Naive thymus-derived CD4-positive, alpha-beta T cell (primary cell): ENCODE measurements at regions of chr9 and their contacts with region 1.

Region 1: GRCh38 chr9:2087500-2088313 is 72.6 kb downstream of the SMARCA2 start:
- DNase-seq: peak in 7 of 9 donors; percentile 36 to 64 (median 58)
- ATAC-seq: peak; percentile 97
- H3K4me3 ChIP-seq: no peak overlapping the region
- H3K4me3 Mint-ChIP-seq: no peak overlapping the region
- H3K27ac ChIP-seq: no peak overlapping the region
- H3K27ac Mint-ChIP-seq: peak overlapping the region in 4 of 9 donors; percentile 0 to 8 (median 4)
- H3K4me1 ChIP-seq: no peaks in the 10 kb centered on the region
- H3K4me1 Mint-ChIP-seq: peaks cover 0 to 11% (median 6%) of the 10 kb centered on the region in 7 donors
- H3K27me3 ChIP-seq: no peaks in the 10 kb centered on the region
- H3K27me3 Mint-ChIP-seq: no peaks in the 10 kb centered on the region

Region 2: GRCh38 chr9:1303932-1304331 is 783.8 kb before region 1 on chr9:
- CTCF ChIA-PET with region 1: no interaction called
- POLR2A ChIA-PET with region 1: no interaction called
- intact Hi-C with region 1: loop called in 1 of 2 experiments (anchors 10 kb)
- DNase-seq: no peak
- ATAC-seq: no peak
- H3K4me3 ChIP-seq: no peak overlapping the region
- H3K4me3 Mint-ChIP-seq: no peak overlapping the region
- H3K27ac ChIP-seq: no peak overlapping the region
- H3K27ac Mint-ChIP-seq: no peak overlapping the region
- H3K4me1 ChIP-seq: no peaks in the 10 kb centered on the region
- H3K4me1 Mint-ChIP-seq: no peaks in the 10 kb centered on the region
- H3K27me3 ChIP-seq: no peaks in the 10 kb centered on the region
- H3K27me3 Mint-ChIP-seq: peaks cover 0 to 5% (median 0%) of the 10 kb centered on the region in 5 donors

Region 3: DNA sequence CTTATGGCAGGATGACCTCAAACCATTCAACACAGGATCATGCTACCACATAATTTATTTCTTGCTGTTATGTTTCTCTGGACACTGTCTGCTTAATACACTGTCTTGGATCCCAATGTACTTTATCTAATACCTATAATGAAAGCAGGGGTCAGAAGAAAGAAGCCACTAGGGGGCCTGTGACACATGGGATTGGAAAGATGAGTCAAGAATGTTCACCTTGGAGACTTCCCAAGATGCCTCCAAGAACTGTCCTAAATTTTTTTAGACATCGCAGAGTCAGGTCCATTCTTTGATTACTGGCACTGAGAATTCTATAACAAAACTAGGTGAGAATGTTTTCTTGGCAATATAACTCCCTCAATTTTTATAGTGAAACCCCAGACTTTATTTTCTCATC is 378.4 kb before region 1 on chr9:
- CTCF ChIA-PET with region 1: interaction called, 4 read pairs
- POLR2A ChIA-PET with region 1: no interaction called
- intact Hi-C with region 1: loop called (anchors 1 kb)
- DNase-seq: peak in 1 of 9 donors; percentile 1
- ATAC-seq: no peak
- H3K4me3 ChIP-seq: no peak overlapping the region
- H3K4me3 Mint-ChIP-seq: no peak overlapping the region
- H3K27ac ChIP-seq: no peak overlapping the region
- H3K27ac Mint-ChIP-seq: no peak overlapping the region
- H3K4me1 ChIP-seq: no peaks in the 10 kb centered on the region
- H3K4me1 Mint-ChIP-seq: no peaks in the 10 kb centered on the region
- H3K27me3 ChIP-seq: no peaks in the 10 kb centered on the region
- H3K27me3 Mint-ChIP-seq: peaks cover 8 to 37% (median 18%) of the 10 kb centered on the region in 5 donors

Region 4: DNA sequence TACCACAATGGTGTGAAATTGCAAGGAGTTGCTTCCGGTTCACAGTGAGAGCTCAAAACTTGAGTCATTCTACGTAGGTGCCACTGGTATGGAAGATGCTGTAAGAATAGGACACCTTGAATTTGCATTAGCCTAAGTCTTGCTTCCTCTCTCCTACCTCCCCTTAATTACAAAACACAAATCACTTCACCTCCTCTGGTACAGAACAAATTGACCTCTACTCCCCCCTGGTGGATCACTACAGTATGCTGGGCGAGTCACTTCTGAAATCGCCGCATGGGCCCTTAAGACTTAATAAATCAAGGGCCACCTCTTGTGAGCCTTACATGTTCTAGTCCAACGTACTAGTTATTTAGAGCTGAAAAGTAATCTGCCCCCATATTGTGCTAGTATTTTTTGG is 217.9 kb before region 1 on chr9:
- CTCF ChIA-PET with region 1: no interaction called
- POLR2A ChIA-PET with region 1: no interaction called
- intact Hi-C with region 1: loop called in 1 of 2 experiments (anchors 1 kb)
- DNase-seq: peak in 6 of 9 donors; percentile 2 to 24 (median 16)
- ATAC-seq: no peak
- H3K4me3 ChIP-seq: no peak overlapping the region
- H3K4me3 Mint-ChIP-seq: no peak overlapping the region
- H3K27ac ChIP-seq: no peak overlapping the region
- H3K27ac Mint-ChIP-seq: no peak overlapping the region
- H3K4me1 ChIP-seq: no peaks in the 10 kb centered on the region
- H3K4me1 Mint-ChIP-seq: no peaks in the 10 kb centered on the region
- H3K27me3 ChIP-seq: no peaks in the 10 kb centered on the region
- H3K27me3 Mint-ChIP-seq: peaks cover 0 to 35% (median 4%) of the 10 kb centered on the region in 5 donors

Region 5: DNA sequence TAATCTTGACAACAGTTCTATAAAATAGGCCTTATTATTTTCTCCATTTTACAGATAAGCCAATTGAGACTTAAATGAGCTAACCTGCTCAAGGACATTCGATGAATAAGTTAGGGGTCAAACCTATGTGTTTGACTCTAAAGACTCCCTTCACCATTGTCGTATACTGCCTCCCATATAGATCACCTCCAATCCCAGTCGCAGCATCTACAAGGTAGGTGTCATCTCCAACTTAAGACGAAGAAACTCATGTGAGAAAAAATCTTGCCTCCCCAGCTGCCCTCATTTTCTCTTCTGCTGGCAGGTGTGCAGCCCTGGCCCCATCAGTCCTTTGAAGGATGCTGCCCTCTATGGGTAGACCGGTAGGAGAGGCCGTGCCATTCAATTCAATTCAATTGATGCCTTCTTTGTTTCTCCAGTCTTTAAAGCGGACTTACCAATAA is 147.8 kb before region 1 on chr9:
- CTCF ChIA-PET with region 1: interaction called, 4 read pairs
- POLR2A ChIA-PET with region 1: no interaction called
- intact Hi-C with region 1: loop called (anchors 1 to 5 kb)
- DNase-seq: peak in 6 of 9 donors; percentile 19 to 44 (median 26)
- ATAC-seq: peak; percentile 70
- H3K4me3 ChIP-seq: no peak overlapping the region
- H3K4me3 Mint-ChIP-seq: no peak overlapping the region
- H3K27ac ChIP-seq: no peak overlapping the region
- H3K27ac Mint-ChIP-seq: no peak overlapping the region
- H3K4me1 ChIP-seq: no peaks in the 10 kb centered on the region
- H3K4me1 Mint-ChIP-seq: peaks cover 0 to 5% (median 0%) of the 10 kb centered on the region in 7 donors
- H3K27me3 ChIP-seq: no peaks in the 10 kb centered on the region
- H3K27me3 Mint-ChIP-seq: peaks cover 0 to 11% (median 6%) of the 10 kb centered on the region in 5 donors

Region 6: DNA sequence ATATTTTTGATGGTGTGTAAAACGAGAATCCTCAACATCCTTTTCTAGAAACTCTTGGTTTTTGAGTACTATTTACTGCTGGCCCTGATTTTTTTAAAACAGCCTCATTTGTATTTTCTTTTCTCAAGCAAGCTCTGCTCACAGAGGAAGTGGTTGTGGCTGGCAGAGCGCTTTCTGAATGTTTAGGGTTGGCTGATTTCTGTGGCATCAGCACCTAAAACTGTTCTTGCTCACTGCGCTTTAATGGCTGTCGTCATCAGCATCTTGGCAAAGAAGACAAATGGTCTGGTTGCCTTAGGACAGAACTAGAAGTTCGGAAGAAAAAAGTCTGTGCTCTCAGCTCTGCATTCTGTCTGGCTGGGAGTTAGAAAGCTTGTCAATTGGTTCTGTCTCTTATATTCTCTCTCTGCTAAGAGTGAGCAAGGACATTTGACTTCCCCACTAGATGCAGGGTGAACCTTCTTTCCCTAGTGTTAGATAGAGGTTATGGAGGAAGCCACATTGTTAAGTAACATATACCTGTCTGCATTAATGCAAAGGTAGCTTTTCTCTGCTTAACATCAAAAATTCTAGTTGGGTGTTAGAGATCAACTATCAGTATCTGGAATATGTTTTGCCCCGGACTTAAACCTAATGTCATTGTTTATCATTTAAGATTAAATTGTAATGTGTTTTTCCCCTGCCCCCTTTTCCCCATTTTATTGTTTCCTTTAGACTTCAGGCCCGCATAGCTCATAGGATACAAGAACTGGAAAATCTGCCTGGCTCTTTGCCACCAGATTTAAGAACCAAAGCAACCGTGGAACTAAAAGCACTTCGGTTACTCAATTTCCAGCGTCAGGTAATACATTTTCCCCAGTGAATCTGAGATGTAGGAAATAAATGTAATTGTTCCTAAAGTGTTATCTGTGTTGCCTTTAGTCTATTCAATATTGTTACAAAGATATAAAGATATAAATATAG is 33.5 kb before region 1 on chr9:
- CTCF ChIA-PET with region 1: interaction called, 4 read pairs
- POLR2A ChIA-PET with region 1: no interaction called
- intact Hi-C with region 1: loop called in 1 of 2 experiments (anchors 2 kb)
- DNase-seq: peak; percentile 23 to 90 (median 83)
- ATAC-seq: peak; percentile 97
- H3K4me3 ChIP-seq: no peak overlapping the region
- H3K4me3 Mint-ChIP-seq: peak overlapping the region; percentile 2 to 79 (median 69)
- H3K27ac ChIP-seq: peak overlapping the region; percentile 60
- H3K27ac Mint-ChIP-seq: peak overlapping the region; percentile 87 to 97 (median 93)
- H3K4me1 ChIP-seq: peaks cover 26 to 29% of the 10 kb centered on the region in 2 donors
- H3K4me1 Mint-ChIP-seq: peaks cover 24 to 71% (median 64%) of the 10 kb centered on the region in 7 donors
- H3K27me3 ChIP-seq: no peaks in the 10 kb centered on the region
- H3K27me3 Mint-ChIP-seq: no peaks in the 10 kb centered on the region

Region 7: GRCh38 chr9:2066312-2067273 is 21.1 kb before region 1 on chr9:
- CTCF ChIA-PET with region 1: interaction called, 9 read pairs
- POLR2A ChIA-PET with region 1: no interaction called
- intact Hi-C with region 1: loop called in 1 of 2 experiments (anchors 1 kb)
- DNase-seq: peak in 6 of 9 donors; percentile 21 to 52 (median 32)
- ATAC-seq: peak; percentile 67
- H3K4me3 ChIP-seq: no peak overlapping the region
- H3K4me3 Mint-ChIP-seq: no peak overlapping the region
- H3K27ac ChIP-seq: no peak overlapping the region
- H3K27ac Mint-ChIP-seq: peak overlapping the region in 3 of 9 donors; percentile 27 to 53 (median 30)
- H3K4me1 ChIP-seq: no peaks in the 10 kb centered on the region
- H3K4me1 Mint-ChIP-seq: peaks cover 0 to 10% (median 3%) of the 10 kb centered on the region in 7 donors
- H3K27me3 ChIP-seq: no peaks in the 10 kb centered on the region
- H3K27me3 Mint-ChIP-seq: no peaks in the 10 kb centered on the region